IMR-90 (cell line): ENCODE measurements at regions of chr2 and their contacts with region 1.

Region 1: DNA sequence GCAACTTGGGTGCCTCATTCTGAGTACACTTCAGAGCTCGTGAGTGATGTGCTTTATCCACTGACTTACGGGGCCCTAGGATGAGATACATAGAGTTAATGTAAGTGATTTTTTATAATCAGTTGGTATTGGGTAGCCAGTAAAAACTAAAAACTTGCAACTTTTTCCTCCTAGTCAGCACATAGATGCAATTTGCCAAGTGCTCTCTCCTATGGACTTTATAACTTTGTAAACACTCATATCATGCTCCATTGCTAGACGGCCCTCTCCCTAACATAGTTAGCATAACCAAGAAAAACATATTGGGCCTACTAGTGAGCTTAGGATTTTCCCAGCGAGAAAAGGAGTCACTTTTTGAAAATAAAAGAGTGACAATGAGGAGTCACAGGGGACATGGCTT is 60.4 kb downstream of the PLB1 start:
- DNase-seq: no peak
- ATAC-seq: no peak
- H3K4me3 ChIP-seq: no peak overlapping the region
- H3K27ac ChIP-seq: no peak overlapping the region
- H3K4me1 ChIP-seq: no peaks in the 10 kb centered on the region
- H3K27me3 ChIP-seq: no peaks in the 10 kb centered on the region
- CTCF ChIP-seq: no peak
- POLR2A ChIP-seq: no peak
- RAD21 ChIP-seq: no peak

Region 2: DNA sequence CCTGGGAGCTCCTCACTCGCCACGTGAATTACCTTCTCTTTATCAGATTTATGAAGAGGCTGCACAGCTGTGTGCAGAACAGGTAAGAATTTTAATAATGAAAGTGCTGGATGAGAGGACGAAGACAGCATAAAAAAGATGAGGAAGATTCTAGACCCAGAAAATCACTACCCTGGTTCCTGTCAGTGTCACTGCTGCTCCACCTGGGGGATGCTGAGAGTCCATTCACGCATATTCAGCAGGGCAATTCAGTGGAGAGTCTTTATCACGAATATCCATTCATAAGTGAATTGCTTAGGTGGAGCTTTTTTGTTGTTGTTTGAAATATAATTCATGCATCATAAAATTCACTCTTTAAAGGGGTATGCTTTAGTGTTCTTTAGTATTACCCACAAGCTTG is 732.7 kb before region 1 on chr2:
- CTCF ChIA-PET with region 1: no interaction called
- POLR2A ChIA-PET with region 1: no interaction called
- dilution Hi-C with region 1: no loop called
- in situ Hi-C with region 1: no loop called
- intact Hi-C with region 1: no loop called
- DNase-seq: no peak
- ATAC-seq: no peak
- H3K4me3 ChIP-seq: no peak overlapping the region
- H3K27ac ChIP-seq: no peak overlapping the region
- H3K4me1 ChIP-seq: no peaks in the 10 kb centered on the region
- H3K27me3 ChIP-seq: no peaks in the 10 kb centered on the region
- CTCF ChIP-seq: no peak
- POLR2A ChIP-seq: no peak
- RAD21 ChIP-seq: no peak

Region 3: DNA sequence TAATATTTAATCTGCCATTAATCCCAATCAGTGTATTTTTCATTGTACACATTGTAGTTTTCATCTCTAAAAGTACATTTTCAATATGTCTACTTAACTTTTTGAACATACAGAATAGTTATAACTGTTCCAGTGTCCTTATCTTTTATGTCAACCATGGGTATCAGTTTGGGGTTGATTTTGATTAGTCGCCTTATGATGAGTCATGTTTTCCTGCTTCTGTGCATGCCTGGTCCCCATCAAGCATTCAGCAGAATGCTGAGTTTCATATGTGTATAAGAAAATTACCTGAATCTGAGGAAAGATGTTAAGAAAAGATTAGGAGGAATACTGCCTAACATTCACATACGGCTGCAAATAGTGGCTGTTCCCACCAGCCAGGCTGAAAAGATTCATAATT is 272.1 kb after region 1 on chr2:
- CTCF ChIA-PET with region 1: no interaction called
- POLR2A ChIA-PET with region 1: no interaction called
- dilution Hi-C with region 1: no loop called
- in situ Hi-C with region 1: no loop called
- intact Hi-C with region 1: no loop called
- DNase-seq: peak; percentile 49
- ATAC-seq: peak; percentile 21
- H3K4me3 ChIP-seq: no peak overlapping the region
- H3K27ac ChIP-seq: no peak overlapping the region
- H3K4me1 ChIP-seq: no peaks in the 10 kb centered on the region
- H3K27me3 ChIP-seq: no peaks in the 10 kb centered on the region
- CTCF ChIP-seq: no peak
- POLR2A ChIP-seq: no peak
- RAD21 ChIP-seq: no peak

Region 4: DNA sequence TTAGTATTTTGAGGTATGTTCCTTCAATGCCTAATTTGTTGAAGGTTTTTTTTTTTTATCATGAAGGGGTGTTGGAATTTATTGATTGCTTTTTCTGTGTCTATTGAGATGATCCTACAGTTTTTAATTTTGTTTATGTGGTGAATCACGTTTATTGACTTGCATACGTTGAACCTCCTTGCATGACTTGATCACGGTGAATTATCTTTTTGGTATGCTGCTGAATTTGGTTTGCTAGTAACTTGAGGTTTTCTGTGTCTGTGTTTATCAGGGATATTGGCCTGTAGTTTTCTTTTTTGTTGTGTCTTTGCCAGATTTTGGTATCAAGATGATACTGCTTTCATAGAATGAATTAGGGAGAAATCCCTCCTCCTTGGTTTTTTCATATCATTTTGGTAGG is 582.8 kb after region 1 on chr2:
- CTCF ChIA-PET with region 1: no interaction called
- POLR2A ChIA-PET with region 1: interaction called, 11 read pairs
- dilution Hi-C with region 1: no loop called
- in situ Hi-C with region 1: no loop called
- intact Hi-C with region 1: no loop called
- DNase-seq: peak; percentile 81
- ATAC-seq: peak; percentile 53
- H3K4me3 ChIP-seq: no peak overlapping the region
- H3K27ac ChIP-seq: no peak overlapping the region
- H3K4me1 ChIP-seq: 0 out of 2 replicates have a peak, but pooled peaks cover 2% of the 10 kb centered on the region
- H3K27me3 ChIP-seq: no peaks in the 10 kb centered on the region
- CTCF ChIP-seq: no peak
- POLR2A ChIP-seq: no peak
- RAD21 ChIP-seq: no peak